CD8-positive, alpha-beta T cell (primary cell): ENCODE measurements at regions of chr14 and their contacts with region 1.

Region 1: DNA sequence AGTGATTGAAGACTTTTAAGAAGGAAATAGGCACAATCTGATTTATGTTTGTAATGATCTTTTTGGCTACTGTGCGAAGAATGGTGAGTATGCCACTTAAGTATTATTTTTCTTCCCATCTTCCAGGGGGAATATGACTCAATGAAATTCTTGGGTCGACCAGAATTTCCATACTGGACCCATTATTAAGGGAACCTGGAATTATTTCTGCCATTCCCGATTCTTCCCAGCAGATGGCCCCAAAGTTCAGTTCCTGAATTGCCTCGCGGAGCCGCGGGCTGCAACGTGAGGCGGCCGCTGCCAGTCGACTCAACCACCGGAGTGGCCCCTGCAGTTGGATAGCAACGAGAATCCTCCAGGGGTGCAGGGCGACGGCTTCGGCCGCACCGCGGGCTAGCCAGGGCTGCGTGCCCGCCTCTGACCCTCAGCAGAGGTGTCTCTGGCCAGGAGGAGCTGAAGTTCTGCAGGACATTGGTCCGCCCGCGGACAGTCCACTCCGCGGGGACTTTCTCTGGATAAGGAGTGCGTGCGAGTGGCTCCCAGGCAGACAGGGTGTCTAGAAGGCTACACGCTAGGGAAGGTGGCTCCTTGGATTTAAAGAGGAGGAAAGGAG is 628 bp upstream of the TSHR start:
- DNase-seq: peak; percentile 52 to 83 (median 76)
- ATAC-seq: peak; percentile 67
- H3K4me3 ChIP-seq: peak overlapping the region; percentile 60 to 72
- H3K4me3 Mint-ChIP-seq: peak overlapping the region; percentile 87
- H3K27ac ChIP-seq: no peak overlapping the region
- H3K27ac Mint-ChIP-seq: no peak overlapping the region
- H3K4me1 ChIP-seq: peaks cover 6% of the 10 kb centered on the region
- H3K4me1 Mint-ChIP-seq: peaks cover 35% of the 10 kb centered on the region
- H3K27me3 ChIP-seq: no peaks in the 10 kb centered on the region
- H3K27me3 Mint-ChIP-seq: no peaks in the 10 kb centered on the region
- CTCF ChIP-seq: peak; percentile 73

Region 2: GRCh38 chr14:80906946-80907345 is 47.8 kb before region 1 on chr14:
- CTCF ChIA-PET with region 1: no interaction called
- POLR2A ChIA-PET with region 1: no interaction called
- intact Hi-C with region 1: no loop called
- DNase-seq: no peak
- ATAC-seq: no peak
- H3K4me3 ChIP-seq: no peak overlapping the region
- H3K4me3 Mint-ChIP-seq: no peak overlapping the region
- H3K27ac ChIP-seq: no peak overlapping the region
- H3K27ac Mint-ChIP-seq: no peak overlapping the region
- H3K4me1 ChIP-seq: no peaks in the 10 kb centered on the region
- H3K4me1 Mint-ChIP-seq: no peaks in the 10 kb centered on the region
- H3K27me3 ChIP-seq: no peaks in the 10 kb centered on the region
- H3K27me3 Mint-ChIP-seq: no peaks in the 10 kb centered on the region
- CTCF ChIP-seq: no peak

Region 3: GRCh38 chr14:80941241-80942182 is 13.3 kb before region 1 on chr14 and contains the start of gene CEP128:
- CTCF ChIA-PET with region 1: interaction called, 6 read pairs
- POLR2A ChIA-PET with region 1: no interaction called
- intact Hi-C with region 1: loop called in 1 of 2 experiments (anchors 1 kb)
- DNase-seq: peak; percentile 66 to 91 (median 83)
- ATAC-seq: peak; percentile 82
- H3K4me3 ChIP-seq: peak within 1 kb of the TSS; percentile 78
- H3K4me3 Mint-ChIP-seq: peak within 1 kb of the TSS; percentile 87
- H3K27ac ChIP-seq: peak within 1 kb of the TSS; percentile 26 to 36
- H3K27ac Mint-ChIP-seq: peak within 1 kb of the TSS; percentile 92
- H3K4me1 ChIP-seq: peaks cover 15% of the 10 kb centered on the region
- H3K4me1 Mint-ChIP-seq: peaks cover 29% of the 10 kb centered on the region
- H3K27me3 ChIP-seq: no peaks in the 10 kb centered on the region
- H3K27me3 Mint-ChIP-seq: peaks cover 2% of the 10 kb centered on the region
- CTCF ChIP-seq: no peak
- total RNA-seq, gene CEP128: 7.6 to 9.8 TPM

Region 4: GRCh38 chr14:80987235-80988032 is 32.6 kb after region 1 on chr14:
- CTCF ChIA-PET with region 1: interaction called, 210 read pairs
- POLR2A ChIA-PET with region 1: interaction called, 5 read pairs
- intact Hi-C with region 1: loop called (anchors 1 kb)
- DNase-seq: peak; percentile 38 to 80 (median 63)
- ATAC-seq: peak; percentile 82
- H3K4me3 ChIP-seq: no peak overlapping the region
- H3K4me3 Mint-ChIP-seq: no peak overlapping the region
- H3K27ac ChIP-seq: no peak overlapping the region
- H3K27ac Mint-ChIP-seq: no peak overlapping the region
- H3K4me1 ChIP-seq: no peaks in the 10 kb centered on the region
- H3K4me1 Mint-ChIP-seq: no peaks in the 10 kb centered on the region
- H3K27me3 ChIP-seq: no peaks in the 10 kb centered on the region
- H3K27me3 Mint-ChIP-seq: peaks cover 2% of the 10 kb centered on the region
- CTCF ChIP-seq: peak; percentile 96

Region 5: DNA sequence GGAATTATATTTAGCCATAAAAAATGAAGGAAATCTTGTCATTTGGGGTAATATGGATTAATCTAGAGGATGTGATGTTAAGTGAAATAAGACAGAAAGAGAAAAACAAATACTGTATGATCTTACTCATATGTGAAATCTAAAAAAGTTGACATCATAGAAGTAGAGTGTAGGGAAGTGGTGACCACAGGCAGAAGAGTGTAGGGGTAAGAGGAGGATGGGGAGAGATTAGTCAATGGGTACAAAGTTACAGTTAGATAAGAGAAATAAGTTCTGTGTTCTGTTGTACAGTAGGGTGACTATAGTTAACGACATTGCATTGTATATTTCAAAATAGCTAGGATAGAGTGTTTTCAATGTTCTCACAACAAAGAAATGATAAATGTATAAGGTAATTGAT is 87.6 kb after region 1 on chr14:
- CTCF ChIA-PET with region 1: no interaction called
- POLR2A ChIA-PET with region 1: no interaction called
- intact Hi-C with region 1: no loop called
- DNase-seq: no peak
- ATAC-seq: no peak
- H3K4me3 ChIP-seq: no peak overlapping the region
- H3K4me3 Mint-ChIP-seq: no peak overlapping the region
- H3K27ac ChIP-seq: no peak overlapping the region
- H3K27ac Mint-ChIP-seq: no peak overlapping the region
- H3K4me1 ChIP-seq: no peaks in the 10 kb centered on the region
- H3K4me1 Mint-ChIP-seq: no peaks in the 10 kb centered on the region
- H3K27me3 ChIP-seq: no peaks in the 10 kb centered on the region
- H3K27me3 Mint-ChIP-seq: no peaks in the 10 kb centered on the region
- CTCF ChIP-seq: no peak

Region 6: DNA sequence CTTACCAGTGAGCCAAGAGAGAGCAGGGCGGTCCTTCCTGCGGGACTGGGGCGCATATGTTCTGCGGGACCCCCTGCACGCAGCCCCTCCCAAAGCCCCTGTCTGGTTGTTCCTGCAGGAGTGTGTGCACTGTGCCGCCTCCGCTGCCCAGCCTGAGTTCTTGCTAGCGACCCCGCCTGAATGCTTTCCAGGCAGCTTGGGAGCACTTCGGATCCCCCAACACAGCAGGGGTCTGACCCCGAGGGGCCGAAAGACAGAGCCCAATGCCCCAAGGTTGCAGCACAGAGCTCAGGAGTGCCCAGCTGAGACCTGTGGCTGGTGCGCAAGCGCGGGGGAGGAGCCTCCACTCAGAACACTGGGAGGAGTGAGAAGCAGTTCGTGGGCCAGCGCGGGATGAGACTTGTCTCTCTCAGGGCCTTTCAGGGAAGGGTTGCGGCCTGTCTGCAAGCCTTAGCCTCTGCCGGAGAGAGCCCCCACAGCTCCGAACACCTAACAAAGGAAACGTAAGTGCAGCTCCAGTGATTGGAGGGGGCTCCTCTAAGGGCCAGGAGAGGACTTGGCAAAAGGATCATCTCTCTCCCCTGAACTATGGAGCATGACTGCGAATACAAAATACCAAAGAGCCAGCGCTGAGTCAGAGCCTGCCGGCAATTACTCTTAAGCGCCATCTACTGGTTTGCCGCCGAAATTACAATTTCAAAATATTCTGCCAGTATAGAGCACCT is 215.5 kb after region 1 on chr14:
- CTCF ChIA-PET with region 1: interaction called, 5 read pairs
- POLR2A ChIA-PET with region 1: interaction called, 4 read pairs
- intact Hi-C with region 1: loop called (anchors 1 to 2 kb)
- DNase-seq: peak; percentile 72 to 92 (median 89)
- ATAC-seq: peak; percentile 97
- H3K4me3 ChIP-seq: peak overlapping the region; percentile 67 to 70
- H3K4me3 Mint-ChIP-seq: peak overlapping the region; percentile 94
- H3K27ac ChIP-seq: peak overlapping the region; percentile 53 to 81
- H3K27ac Mint-ChIP-seq: peak overlapping the region; percentile 97
- H3K4me1 ChIP-seq: peaks cover 12% of the 10 kb centered on the region
- H3K4me1 Mint-ChIP-seq: peaks cover 20% of the 10 kb centered on the region
- H3K27me3 ChIP-seq: no peaks in the 10 kb centered on the region
- H3K27me3 Mint-ChIP-seq: no peaks in the 10 kb centered on the region
- CTCF ChIP-seq: peak; percentile 77

Region 7: DNA sequence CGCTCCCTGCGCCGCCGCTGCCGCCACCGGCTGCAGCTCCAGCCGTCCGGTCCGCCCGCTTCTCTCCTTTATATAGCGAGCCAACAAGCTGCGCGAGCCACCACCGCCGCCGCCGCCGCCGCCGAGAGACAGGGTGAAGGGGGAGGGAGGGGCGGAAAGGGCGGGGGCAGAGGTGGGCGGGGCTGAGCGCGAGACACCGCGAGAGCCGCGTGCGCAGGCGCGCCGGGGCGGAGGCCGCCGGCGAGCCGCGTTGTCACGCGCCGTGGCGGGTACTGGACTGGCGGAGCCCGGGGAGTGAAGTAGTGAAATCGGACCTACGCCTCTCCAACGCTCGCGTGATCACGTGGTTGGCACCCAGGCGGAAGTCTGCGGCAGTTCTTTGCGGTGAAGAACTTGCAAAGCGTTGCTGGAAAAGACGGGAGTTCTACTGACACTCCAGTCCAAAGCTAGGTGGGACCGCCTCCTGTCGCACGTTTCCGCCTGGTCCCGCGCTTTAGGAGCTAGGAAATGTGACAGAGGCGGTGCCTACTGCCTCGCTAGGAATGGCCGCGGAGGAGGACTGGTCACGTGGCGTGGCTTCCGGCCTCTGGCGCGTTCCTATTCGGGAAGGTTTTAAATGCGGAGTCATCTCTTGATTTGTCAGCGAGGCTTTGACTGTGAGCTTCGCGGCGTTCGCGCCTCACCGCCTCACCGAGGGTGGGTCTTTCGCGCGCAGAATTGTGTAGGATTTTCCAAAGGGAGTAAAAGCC is 266.2 kb after region 1 on chr14 and contains the start of gene GTF2A1:
- CTCF ChIA-PET with region 1: no interaction called
- POLR2A ChIA-PET with region 1: no interaction called
- intact Hi-C with region 1: loop called in 1 of 2 experiments (anchors 2 kb)
- DNase-seq: peak; percentile 91 to 98 (median 94)
- ATAC-seq: peak; percentile 69
- H3K4me3 ChIP-seq: peak within 1 kb of the TSS; percentile 93 to 94
- H3K4me3 Mint-ChIP-seq: peak within 1 kb of the TSS; percentile 99
- H3K27ac ChIP-seq: peak within 1 kb of the TSS; percentile 95 to 97
- H3K27ac Mint-ChIP-seq: peak within 1 kb of the TSS; percentile 100
- H3K4me1 ChIP-seq: peaks cover 31% of the 10 kb centered on the region
- H3K4me1 Mint-ChIP-seq: peaks cover 38% of the 10 kb centered on the region
- H3K27me3 ChIP-seq: no peaks in the 10 kb centered on the region
- H3K27me3 Mint-ChIP-seq: no peaks in the 10 kb centered on the region
- CTCF ChIP-seq: no peak
- total RNA-seq, gene GTF2A1: 12.6 to 14.6 TPM

Region 8: GRCh38 chr14:81533536-81534343 is 578.9 kb after region 1 on chr14 and contains the start of gene SEL1L:
- CTCF ChIA-PET with region 1: no interaction called
- POLR2A ChIA-PET with region 1: no interaction called
- intact Hi-C with region 1: loop called in 1 of 2 experiments (anchors 5 kb)
- DNase-seq: peak; percentile 99 to 100 (median 99)
- ATAC-seq: peak; percentile 95
- H3K4me3 ChIP-seq: peak within 1 kb of the TSS; percentile 84 to 88
- H3K4me3 Mint-ChIP-seq: peak within 1 kb of the TSS; percentile 99
- H3K27ac ChIP-seq: peak within 1 kb of the TSS; percentile 70
- H3K27ac Mint-ChIP-seq: peak within 1 kb of the TSS; percentile 91
- H3K4me1 ChIP-seq: peaks cover 29% of the 10 kb centered on the region
- H3K4me1 Mint-ChIP-seq: peaks cover 65% of the 10 kb centered on the region
- H3K27me3 ChIP-seq: no peaks in the 10 kb centered on the region
- H3K27me3 Mint-ChIP-seq: no peaks in the 10 kb centered on the region
- CTCF ChIP-seq: no peak
- total RNA-seq, gene SEL1L: 41.2 to 46.5 TPM